ENCODE measurements at regions of chr10 and their contacts with region 1.

Region 1: GRCh38 chr10:95693668-95694534 is at the start of gene TCTN3:
- DNase-seq: peak; percentile 100
- ATAC-seq: peak; percentile 97
- H3K4me3 ChIP-seq: peak within 1 kb of the TSS; percentile 61 to 96 (median 73)
- H3K4me3 Mint-ChIP-seq: peak within 1 kb of the TSS; percentile 95
- H3K27ac ChIP-seq: peak within 1 kb of the TSS; percentile 58 to 93
- H3K27ac Mint-ChIP-seq: peak within 1 kb of the TSS; percentile 95
- H3K4me1 ChIP-seq: peaks cover 36 to 39% of the 10 kb centered on the region in 2 donors
- H3K4me1 Mint-ChIP-seq: peaks cover 67% of the 10 kb centered on the region
- H3K27me3 ChIP-seq: no peaks in the 10 kb centered on the region
- H3K27me3 Mint-ChIP-seq: no peaks in the 10 kb centered on the region
- CTCF ChIP-seq: peak; percentile 98
- total RNA-seq, gene TCTN3: 33.6 and 34.1 TPM in 2 replicates

Region 2: DNA sequence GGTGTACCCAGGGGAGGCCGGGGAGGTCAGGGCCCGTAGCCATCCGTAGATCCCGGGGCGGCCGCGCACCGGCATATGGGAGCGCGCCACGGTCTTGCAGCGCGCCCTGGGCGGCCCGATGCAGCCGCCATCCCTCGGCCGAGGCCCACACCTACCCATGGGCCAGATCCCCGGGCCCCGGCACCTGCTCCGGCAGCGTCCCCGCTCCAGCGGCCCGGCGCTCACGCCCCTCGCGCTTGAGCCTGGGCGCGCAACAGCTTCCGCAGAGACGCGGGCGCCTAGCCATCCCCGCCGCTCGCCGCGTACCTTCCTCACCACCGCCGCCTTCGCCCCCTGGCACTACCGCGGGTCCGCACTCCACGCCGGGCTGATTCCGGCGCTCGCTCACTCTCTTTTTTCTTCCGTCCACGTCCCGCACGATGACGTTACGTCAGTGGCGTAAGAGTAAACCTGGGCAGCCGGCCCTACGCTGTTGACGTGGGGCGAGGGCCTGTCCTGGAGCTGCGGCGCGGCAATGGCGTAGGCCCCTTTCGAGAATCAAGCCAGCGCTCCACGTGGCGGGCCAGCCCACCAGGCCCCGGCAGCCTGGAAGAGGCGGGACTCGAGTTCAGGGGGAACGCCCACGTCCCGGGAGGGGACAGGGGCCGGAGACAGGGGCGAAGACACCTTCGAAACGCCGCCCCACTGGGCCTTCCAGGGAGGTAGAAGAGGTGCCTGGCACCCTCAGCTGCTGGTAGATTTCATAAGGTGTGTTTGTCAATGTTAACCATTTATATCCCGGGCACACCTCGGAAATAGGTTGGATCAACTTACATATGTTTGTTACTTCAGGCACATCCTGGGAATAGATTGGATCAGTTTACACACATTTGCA is 37.4 kb before region 1 on chr10 and contains the start of gene ALDH18A1:
- CTCF ChIA-PET with region 1: interaction called, 5 read pairs
- POLR2A ChIA-PET with region 1: interaction called, 3 read pairs
- intact Hi-C with region 1: loop called (anchors 1 kb)
- DNase-seq: peak; percentile 96
- ATAC-seq: peak; percentile 95
- H3K4me3 ChIP-seq: peak within 1 kb of the TSS; percentile 0 to 74 (median 64)
- H3K4me3 Mint-ChIP-seq: peak within 1 kb of the TSS; percentile 98
- H3K27ac ChIP-seq: peak within 1 kb of the TSS in 1 of 2 donors; percentile 27
- H3K27ac Mint-ChIP-seq: peak within 1 kb of the TSS; percentile 93
- H3K4me1 ChIP-seq: peaks cover 7 to 13% of the 10 kb centered on the region in 2 donors
- H3K4me1 Mint-ChIP-seq: peaks cover 30% of the 10 kb centered on the region
- H3K27me3 ChIP-seq: no peaks in the 10 kb centered on the region
- H3K27me3 Mint-ChIP-seq: no peaks in the 10 kb centered on the region
- CTCF ChIP-seq: no peak
- total RNA-seq, gene ALDH18A1: 27.6 and 30.7 TPM in 2 replicates

Region 3: GRCh38 chr10:95728526-95728925 is 34.6 kb after region 1 on chr10:
- CTCF ChIA-PET with region 1: interaction called, 75 read pairs
- POLR2A ChIA-PET with region 1: no interaction called
- intact Hi-C with region 1: loop called (anchors 1 kb)
- DNase-seq: no peak
- ATAC-seq: peak; percentile 68
- H3K4me3 ChIP-seq: no peak overlapping the region
- H3K4me3 Mint-ChIP-seq: no peak overlapping the region
- H3K27ac ChIP-seq: no peak overlapping the region
- H3K27ac Mint-ChIP-seq: peak overlapping the region; percentile 56
- H3K4me1 ChIP-seq: peaks cover 22 to 25% of the 10 kb centered on the region in 2 donors
- H3K4me1 Mint-ChIP-seq: peaks cover 36% of the 10 kb centered on the region
- H3K27me3 ChIP-seq: no peaks in the 10 kb centered on the region
- H3K27me3 Mint-ChIP-seq: no peaks in the 10 kb centered on the region
- CTCF ChIP-seq: no peak

Region 4: DNA sequence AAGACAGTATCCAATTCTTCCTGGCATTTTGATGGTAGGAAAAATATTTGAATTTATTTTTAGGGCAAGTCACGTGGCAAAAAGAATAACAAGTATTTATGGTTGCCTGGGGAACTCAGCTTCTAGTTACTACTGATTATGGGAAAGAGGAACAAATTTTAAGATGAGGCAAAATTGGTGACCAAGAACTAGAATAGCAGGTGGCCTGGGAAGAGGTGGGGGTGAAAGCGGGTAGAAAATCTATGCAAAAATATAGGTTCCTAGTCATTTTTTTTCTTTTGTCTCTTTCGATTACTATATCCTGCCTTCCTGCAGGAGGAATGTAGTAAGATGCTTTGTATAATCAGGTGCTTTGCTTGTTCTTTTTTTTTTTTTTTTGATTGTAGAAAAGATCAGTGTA is 89.8 kb after region 1 on chr10:
- CTCF ChIA-PET with region 1: interaction called, 39 read pairs
- POLR2A ChIA-PET with region 1: no interaction called
- intact Hi-C with region 1: no loop called
- DNase-seq: peak; percentile 84
- ATAC-seq: peak; percentile 52
- H3K4me3 ChIP-seq: peak overlapping the region in 1 of 5 experiments; percentile 13
- H3K4me3 Mint-ChIP-seq: peak overlapping the region; percentile 38
- H3K27ac ChIP-seq: peak overlapping the region; percentile 92 to 96
- H3K27ac Mint-ChIP-seq: peak overlapping the region; percentile 92
- H3K4me1 ChIP-seq: peaks cover 75 to 76% of the 10 kb centered on the region in 2 donors
- H3K4me1 Mint-ChIP-seq: peaks cover 90% of the 10 kb centered on the region
- H3K27me3 ChIP-seq: no peaks in the 10 kb centered on the region
- H3K27me3 Mint-ChIP-seq: no peaks in the 10 kb centered on the region
- CTCF ChIP-seq: no peak

Region 5: DNA sequence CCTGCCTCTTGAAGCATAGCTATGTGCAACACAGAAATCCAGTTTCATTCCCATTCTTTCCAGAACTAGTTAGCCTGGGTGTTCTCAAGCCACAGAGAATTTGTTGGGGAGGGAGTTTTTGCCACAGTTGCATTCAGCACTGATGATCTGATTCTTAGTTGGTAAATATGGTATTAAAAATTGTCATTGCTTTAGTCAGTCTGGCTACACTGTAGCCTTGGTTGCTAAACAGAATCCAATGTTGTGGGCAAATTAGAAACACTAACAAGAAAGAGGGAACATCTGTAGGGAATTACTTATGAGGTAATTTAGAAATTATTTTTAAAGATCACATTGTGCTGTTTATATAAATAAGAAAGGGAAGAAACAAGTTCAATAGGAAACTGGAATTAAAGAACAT is 156.9 kb after region 1 on chr10:
- CTCF ChIA-PET with region 1: interaction called, 704 read pairs
- POLR2A ChIA-PET with region 1: interaction called, 4 read pairs
- intact Hi-C with region 1: no loop called
- DNase-seq: no peak
- ATAC-seq: no peak
- H3K4me3 ChIP-seq: no peak overlapping the region
- H3K4me3 Mint-ChIP-seq: no peak overlapping the region
- H3K27ac ChIP-seq: no peak overlapping the region
- H3K27ac Mint-ChIP-seq: no peak overlapping the region
- H3K4me1 ChIP-seq: no peaks in the 10 kb centered on the region
- H3K4me1 Mint-ChIP-seq: no peaks in the 10 kb centered on the region
- H3K27me3 ChIP-seq: no peaks in the 10 kb centered on the region
- H3K27me3 Mint-ChIP-seq: no peaks in the 10 kb centered on the region
- CTCF ChIP-seq: no peak

Region 6: DNA sequence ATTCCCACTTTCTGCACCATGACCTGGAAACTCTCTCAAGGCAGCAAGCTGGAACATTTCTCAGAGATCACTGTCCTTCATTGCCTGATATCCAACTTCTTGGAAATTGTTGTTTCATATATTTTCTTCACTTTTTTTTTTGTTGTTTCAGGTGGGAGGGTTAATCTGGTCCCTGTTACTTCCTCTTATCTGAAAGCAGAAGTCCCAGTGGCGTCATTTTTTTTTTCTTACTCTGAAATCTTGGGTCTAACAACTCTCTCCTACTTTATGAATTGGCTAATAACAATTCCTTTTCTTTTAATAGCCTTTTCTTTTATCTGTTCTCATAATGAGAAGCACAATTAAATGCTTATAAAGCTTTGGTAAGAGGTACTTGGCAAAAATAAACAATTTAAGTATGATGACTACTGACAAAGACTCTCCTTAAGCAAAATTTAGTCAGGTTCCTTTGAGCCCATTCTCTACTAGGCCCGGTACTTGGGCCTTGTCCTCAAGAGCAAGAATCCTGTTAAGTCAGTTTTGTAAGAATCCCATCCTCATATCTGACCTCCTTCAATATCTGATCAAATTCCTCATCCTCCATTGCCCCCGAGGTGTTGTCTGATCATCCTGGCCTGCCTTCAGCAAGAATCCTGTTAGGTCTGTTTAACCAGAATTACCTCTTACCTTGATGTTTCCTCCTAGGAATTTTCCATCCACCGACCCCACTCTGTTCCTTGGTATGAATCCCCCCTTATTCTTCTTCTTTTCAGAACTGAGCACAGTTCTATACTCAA is 202.4 kb after region 1 on chr10:
- CTCF ChIA-PET with region 1: interaction called, 10 read pairs
- POLR2A ChIA-PET with region 1: no interaction called
- intact Hi-C with region 1: no loop called
- DNase-seq: peak; percentile 71
- ATAC-seq: peak; percentile 67
- H3K4me3 ChIP-seq: no peak overlapping the region
- H3K4me3 Mint-ChIP-seq: peak overlapping the region; percentile 12
- H3K27ac ChIP-seq: peak overlapping the region; percentile 11 to 75
- H3K27ac Mint-ChIP-seq: peak overlapping the region; percentile 43
- H3K4me1 ChIP-seq: peaks cover 12 to 15% of the 10 kb centered on the region in 2 donors
- H3K4me1 Mint-ChIP-seq: peaks cover 19% of the 10 kb centered on the region
- H3K27me3 ChIP-seq: no peaks in the 10 kb centered on the region
- H3K27me3 Mint-ChIP-seq: no peaks in the 10 kb centered on the region
- CTCF ChIP-seq: no peak

Region 7: DNA sequence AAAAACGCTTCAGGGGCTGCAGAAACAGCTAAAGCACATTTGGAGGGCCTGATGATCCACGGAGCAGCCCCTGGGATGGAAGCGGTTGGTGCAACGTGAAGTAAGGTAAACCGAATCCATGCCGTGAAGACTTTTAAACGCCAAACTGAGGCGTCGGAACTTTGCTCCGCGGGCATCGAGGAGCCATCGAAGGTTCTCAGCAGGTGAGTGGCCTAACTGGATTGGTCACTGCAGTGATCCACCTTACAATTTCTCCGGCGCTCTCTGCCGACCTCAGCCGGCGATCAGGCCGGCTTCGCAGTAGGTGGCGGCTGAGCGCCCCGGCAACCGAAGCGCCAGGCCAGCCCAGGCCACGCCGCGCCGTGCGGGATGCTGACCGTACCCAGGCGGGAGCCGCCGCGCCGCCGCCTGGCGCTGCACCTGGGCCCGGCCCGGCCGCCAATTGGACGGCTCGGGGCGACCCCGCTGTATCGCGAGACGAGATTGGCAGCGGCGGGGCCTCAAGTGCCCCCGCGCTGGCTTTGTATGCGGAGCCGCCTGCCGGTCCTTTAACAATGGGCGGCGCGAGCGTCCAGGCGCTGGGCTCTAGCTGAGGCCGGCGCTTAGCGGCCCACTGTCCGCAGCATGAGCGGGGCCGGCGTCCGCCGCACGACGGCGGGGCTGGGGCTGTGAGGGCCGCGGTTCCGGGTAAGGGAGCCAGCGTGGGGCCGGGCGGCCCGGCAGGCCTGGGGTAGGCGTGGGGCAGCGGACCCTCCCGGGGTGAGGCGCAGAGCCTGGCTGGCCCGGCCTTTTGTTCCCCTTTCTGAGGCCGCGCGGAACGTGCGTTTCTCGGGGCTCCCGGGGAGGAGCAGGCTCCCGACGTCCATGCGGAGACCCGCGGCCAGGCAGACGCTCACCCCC is 349.4 kb after region 1 on chr10 and contains the start of gene CCNJ:
- CTCF ChIA-PET with region 1: no interaction called
- POLR2A ChIA-PET with region 1: no interaction called
- intact Hi-C with region 1: loop called (anchors 1 kb)
- DNase-seq: peak; percentile 91
- ATAC-seq: peak; percentile 85
- H3K4me3 ChIP-seq: peak within 1 kb of the TSS; percentile 56 to 83 (median 73)
- H3K4me3 Mint-ChIP-seq: peak within 1 kb of the TSS; percentile 96
- H3K27ac ChIP-seq: peak within 1 kb of the TSS; percentile 54 to 84
- H3K27ac Mint-ChIP-seq: peak within 1 kb of the TSS; percentile 88
- H3K4me1 ChIP-seq: peaks cover 11 to 14% of the 10 kb centered on the region in 2 donors
- H3K4me1 Mint-ChIP-seq: peaks cover 37% of the 10 kb centered on the region
- H3K27me3 ChIP-seq: peaks cover 0 to 5% (median 0%) of the 10 kb centered on the region in 4 experiments
- H3K27me3 Mint-ChIP-seq: no peaks in the 10 kb centered on the region
- CTCF ChIP-seq: peak; percentile 3
- total RNA-seq, gene CCNJ: 8.9 and 9.1 TPM in 2 replicates